GM10248 (cell line): ENCODE measurements at regions of chr1 and their contacts with region 1.

Region 1: GRCh38 chr1:67436511-67437055 is 6.4 kb upstream of the SERBP1 start:
- DNase-seq: no peak
- CTCF ChIP-seq: no peak

Region 2: GRCh38 chr1:67404212-67404620 is 32.4 kb before region 1 on chr1:
- CTCF ChIA-PET with region 1: no interaction called
- POLR2A ChIA-PET with region 1: no interaction called
- DNase-seq: no peak
- CTCF ChIP-seq: no peak

Region 3: DNA sequence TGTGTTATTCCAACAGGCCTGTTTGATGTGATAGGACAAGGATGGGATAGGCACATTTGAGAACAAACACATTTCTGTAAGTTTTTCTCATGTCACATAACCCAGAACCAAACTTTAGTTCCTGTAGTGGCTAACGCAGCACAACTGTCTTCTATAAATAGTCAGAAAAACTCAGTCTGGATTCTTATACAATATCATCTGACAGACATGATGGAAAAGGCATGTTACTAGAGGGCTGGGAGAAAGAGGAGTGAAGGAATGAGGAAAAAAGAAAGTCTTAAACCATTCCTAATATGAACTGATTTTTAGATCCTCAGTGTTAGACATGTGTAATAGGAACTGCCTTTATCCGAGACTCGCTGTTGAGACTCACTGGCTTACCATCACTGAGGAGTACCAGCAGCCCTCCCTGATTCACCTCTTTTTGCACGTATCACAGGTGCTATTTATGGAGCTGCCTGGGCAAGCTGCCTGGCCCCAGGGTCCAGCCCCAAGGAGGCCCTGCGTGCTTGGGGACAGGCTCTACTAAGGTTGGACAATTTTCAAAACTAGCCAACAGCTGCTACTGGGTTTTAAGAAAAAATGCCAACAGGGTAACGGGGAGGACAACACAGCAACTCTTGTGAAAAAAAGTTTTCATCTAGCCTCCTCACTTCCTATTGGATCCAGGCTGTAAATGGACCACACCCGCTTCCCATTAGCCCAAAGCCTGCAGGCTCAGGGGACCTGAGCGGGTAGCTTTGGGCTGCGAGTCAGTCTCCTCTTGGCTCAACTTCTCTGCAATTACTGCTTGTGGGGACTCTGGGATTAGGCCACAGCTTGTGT is 24.3 kb after region 1 on chr1:
- CTCF ChIA-PET with region 1: interaction called, 10 read pairs
- POLR2A ChIA-PET with region 1: no interaction called
- DNase-seq: no peak
- CTCF ChIP-seq: no peak